Activated CD8-positive, alpha-beta T cell treated with anti-CD3 and anti-CD28 coated beads, Interleukin-2, amount 10 ng/mL, durations not matched to agents 7 days and 5 days (primary cell): ENCODE measurements at regions of chr19 and their contacts with region 1.

Region 1: GRCh38 chr19:38374429-38375176 is at the start of gene PSMD8:
- DNase-seq: peak; percentile 99
- ATAC-seq: peak; percentile 98
- H3K4me3 Mint-ChIP-seq: peak within 1 kb of the TSS; percentile 100
- H3K27ac Mint-ChIP-seq: peak within 1 kb of the TSS; percentile 99
- H3K4me1 Mint-ChIP-seq: peaks cover 22% of the 10 kb centered on the region
- H3K27me3 Mint-ChIP-seq: peaks cover 4% of the 10 kb centered on the region
- total RNA-seq, gene PSMD8: 173 to 187 TPM

Region 2: DNA sequence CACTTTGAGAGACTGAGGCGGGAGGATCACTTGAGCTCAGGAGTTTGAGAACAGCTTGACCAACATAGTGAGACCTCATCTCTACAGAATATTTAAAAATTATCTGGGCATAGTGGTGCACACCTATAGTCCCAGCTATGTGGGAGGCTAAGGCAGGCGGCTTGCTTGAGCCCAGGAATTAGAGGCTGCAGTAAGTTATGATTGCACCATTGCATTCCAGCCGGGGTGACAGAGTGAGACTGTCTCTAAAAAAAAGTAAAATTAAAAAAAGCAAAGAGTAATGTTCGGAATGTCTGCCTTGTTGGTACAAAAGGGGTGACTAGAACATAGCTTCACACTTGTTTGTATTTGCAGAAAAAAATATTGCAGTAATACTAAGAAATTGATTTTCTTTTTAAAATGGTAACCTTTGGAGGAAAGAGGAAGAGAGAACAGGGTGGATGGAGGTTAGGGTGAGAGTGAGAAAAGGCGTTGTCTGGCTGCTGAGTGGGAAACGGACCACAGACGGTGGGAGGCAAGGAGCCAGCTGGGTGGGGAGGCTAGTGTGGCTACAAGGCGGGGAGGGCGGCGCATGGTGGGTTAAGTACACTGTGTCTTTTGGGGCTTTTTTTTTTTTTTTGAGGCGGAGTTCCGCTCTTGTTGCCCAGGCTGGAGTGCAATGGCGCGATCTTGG is 128.6 kb before region 1 on chr19:
- CTCF ChIA-PET with region 1: interaction called, 17 read pairs
- POLR2A ChIA-PET with region 1: no interaction called
- DNase-seq: no peak
- ATAC-seq: no peak
- H3K4me3 Mint-ChIP-seq: no peak overlapping the region
- H3K27ac Mint-ChIP-seq: no peak overlapping the region
- H3K4me1 Mint-ChIP-seq: peaks cover 2% of the 10 kb centered on the region
- H3K27me3 Mint-ChIP-seq: no peaks in the 10 kb centered on the region

Region 3: DNA sequence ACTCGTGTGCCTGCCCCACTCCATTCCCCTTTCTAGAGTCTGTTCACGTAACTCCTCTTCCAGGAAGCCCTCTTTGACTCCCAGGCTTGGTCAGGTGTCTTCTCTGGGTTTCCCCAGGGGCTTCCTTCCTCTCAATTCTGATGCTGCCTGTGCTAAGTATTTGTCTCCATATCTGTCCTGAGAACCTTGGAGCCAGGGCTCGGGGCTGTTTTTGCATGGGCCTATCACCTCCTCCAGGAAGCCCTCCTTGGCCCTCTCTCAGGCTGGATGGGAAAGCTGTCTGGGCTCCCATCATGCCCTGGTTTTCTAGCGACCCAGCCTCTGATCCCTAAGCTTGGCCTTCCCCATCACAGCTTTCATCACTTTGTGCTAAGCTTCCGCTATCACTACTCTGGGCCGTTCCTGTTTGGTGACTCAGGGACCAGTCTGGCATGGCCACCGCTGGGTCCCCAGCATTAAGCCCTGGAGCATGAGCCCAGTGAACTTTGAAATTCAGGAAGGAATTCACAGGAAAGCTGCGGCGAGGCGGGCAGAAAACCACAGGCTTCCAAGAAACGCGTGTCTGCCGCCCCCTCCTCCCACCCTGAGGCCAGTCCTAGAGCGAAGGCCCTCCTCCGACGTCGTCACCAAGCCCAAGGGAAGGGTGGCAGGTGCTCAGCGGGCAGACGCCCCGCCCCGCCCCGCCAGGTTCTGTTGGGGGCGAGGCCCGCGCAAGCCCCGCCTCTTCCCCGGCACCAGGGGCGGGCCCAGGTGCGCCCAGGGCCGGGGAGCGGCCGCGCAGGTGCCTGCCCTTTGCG is 110.7 kb before region 1 on chr19:
- CTCF ChIA-PET with region 1: interaction called, 10 read pairs
- POLR2A ChIA-PET with region 1: interaction called, 5 read pairs
- DNase-seq: peak; percentile 74
- ATAC-seq: peak; percentile 87
- H3K4me3 Mint-ChIP-seq: peak overlapping the region; percentile 74
- H3K27ac Mint-ChIP-seq: peak overlapping the region; percentile 86
- H3K4me1 Mint-ChIP-seq: peaks cover 26% of the 10 kb centered on the region
- H3K27me3 Mint-ChIP-seq: no peaks in the 10 kb centered on the region

Region 4: DNA sequence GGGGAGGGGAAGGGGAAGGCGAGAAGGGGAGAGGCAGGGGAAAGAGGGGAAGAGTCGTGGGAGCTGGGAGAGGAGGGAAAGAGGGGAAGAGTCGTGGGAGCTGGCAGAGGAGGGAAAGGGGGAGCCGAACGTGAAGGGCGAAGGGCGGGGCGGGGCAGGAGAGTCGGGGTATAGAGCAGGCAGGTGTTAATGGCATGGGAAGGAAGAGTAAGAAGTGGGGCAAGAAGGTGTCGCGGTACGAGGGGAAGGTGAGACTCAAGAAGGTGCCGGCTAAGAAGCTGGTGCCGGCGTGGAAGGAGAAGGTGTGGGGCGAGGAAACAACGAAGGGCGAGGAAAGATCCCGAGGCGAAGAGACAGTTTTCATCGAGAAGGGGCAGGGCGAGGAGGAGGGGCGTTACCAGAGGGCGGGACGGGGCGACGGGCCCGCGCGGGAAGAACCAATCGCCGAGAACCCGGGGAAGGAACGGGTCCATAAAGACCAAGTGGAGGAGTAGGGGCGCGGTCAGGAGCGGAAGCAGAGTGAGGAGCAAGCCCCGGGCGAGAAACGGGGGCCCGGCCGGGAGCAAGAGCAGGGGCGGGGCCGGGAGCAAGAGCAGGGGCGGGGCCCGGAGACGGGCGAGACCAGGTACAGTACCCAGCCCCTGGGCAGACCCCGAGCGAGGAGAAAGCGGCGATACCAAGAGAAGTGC is 38.5 kb before region 1 on chr19:
- CTCF ChIA-PET with region 1: interaction called, 27 read pairs
- POLR2A ChIA-PET with region 1: interaction called, 19 read pairs
- DNase-seq: peak; percentile 96
- ATAC-seq: peak; percentile 83
- H3K4me3 Mint-ChIP-seq: peak overlapping the region; percentile 87
- H3K27ac Mint-ChIP-seq: peak overlapping the region; percentile 98
- H3K4me1 Mint-ChIP-seq: peaks cover 11% of the 10 kb centered on the region
- H3K27me3 Mint-ChIP-seq: no peaks in the 10 kb centered on the region

Region 5: DNA sequence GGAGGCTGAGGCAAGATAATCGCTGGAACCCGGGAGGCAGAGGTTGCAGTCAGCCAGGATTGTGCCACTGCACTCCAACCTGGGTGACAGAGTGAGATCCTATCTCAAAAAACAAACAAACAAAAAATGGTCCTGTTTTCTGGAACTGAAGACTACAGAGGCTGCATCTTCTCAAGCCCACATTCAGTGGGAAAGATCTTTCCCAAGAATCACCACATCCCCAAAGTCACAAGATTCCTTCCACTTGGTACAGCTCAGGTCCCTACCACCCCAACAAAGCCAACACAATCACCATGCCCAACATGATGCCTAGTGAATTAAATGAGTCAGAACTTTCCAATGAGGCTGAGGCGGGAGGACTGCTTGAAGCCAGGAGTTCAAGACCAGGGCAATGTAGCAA is 23.7 kb before region 1 on chr19:
- CTCF ChIA-PET with region 1: no interaction called
- POLR2A ChIA-PET with region 1: no interaction called
- DNase-seq: no peak
- ATAC-seq: no peak
- H3K4me3 Mint-ChIP-seq: no peak overlapping the region
- H3K27ac Mint-ChIP-seq: no peak overlapping the region
- H3K4me1 Mint-ChIP-seq: no peaks in the 10 kb centered on the region
- H3K27me3 Mint-ChIP-seq: no peaks in the 10 kb centered on the region

Region 6: DNA sequence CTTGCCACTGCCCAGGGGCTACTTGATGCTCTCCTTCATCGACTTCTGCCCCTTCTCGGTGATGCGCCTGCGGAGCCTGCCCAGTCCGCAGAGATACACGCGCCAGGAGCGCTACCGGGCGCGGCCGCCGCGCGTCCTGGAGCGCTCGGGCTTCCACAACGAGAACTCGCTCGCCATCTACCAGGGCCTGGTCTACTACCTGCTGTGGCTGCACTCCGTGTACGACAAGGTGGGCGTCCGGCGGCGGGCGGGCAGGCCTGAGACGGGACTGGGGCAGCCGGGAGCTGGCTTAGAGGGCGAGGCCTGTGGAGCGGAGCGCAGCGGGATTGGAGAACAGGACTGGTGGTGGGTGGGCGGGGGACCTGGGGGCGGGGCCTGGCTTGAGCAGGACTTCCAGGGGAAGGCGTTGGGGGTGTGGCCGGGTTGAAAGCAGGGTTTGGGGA is 12.9 kb before region 1 on chr19:
- CTCF ChIA-PET with region 1: interaction called, 8 read pairs
- POLR2A ChIA-PET with region 1: interaction called, 15 read pairs
- DNase-seq: peak; percentile 83
- ATAC-seq: peak; percentile 81
- H3K4me3 Mint-ChIP-seq: peak overlapping the region; percentile 86
- H3K27ac Mint-ChIP-seq: peak overlapping the region; percentile 74
- H3K4me1 Mint-ChIP-seq: peaks cover 18% of the 10 kb centered on the region
- H3K27me3 Mint-ChIP-seq: peaks cover 28% of the 10 kb centered on the region

Region 7: DNA sequence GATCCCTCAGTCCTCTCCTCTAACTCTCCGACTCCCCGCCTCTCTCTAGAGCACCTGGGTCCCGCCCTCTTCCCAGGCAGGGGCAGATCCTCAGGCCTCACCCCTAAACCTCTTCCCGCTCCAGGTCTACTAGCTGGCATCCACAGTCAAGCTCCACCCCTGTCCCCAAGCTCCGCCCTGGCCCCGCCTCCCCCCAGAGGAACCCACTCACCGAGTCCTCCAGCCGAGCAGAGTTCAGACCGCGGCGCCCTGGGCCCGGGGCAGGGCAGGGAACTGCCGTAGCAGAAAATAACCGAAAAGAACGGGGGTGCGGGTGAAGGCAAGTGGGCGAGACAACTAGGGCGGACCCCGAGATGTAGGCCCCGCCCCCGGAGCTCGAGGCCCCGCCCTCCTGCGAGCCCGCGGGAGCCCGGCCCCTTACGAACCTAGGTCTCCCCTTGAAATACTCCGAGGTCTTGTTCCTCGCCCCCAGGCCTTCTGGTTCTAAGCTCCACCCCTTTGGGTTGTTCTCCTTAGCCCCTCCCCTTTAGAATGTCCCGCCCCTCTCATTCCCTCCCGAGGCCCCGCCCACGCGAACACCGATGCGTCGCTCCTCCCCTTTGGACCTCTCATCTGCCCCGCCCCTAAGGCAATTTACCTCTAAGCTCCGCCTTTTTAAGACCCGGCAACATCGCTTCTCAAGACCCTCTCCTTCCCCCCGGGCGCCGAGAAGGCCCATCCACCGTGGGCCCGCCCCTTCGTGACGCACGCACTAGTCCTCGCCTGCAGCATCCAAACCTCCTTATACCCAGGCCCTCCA is 13.1 kb after region 1 on chr19 and contains the start of gene GGN:
- CTCF ChIA-PET with region 1: interaction called, 9 read pairs
- POLR2A ChIA-PET with region 1: interaction called, 15 read pairs
- DNase-seq: peak; percentile 77
- ATAC-seq: peak; percentile 78
- H3K4me3 Mint-ChIP-seq: peak within 1 kb of the TSS; percentile 70
- H3K27ac Mint-ChIP-seq: peak within 1 kb of the TSS; percentile 46
- H3K4me1 Mint-ChIP-seq: peaks cover 19% of the 10 kb centered on the region
- H3K27me3 Mint-ChIP-seq: peaks cover 37% of the 10 kb centered on the region
- total RNA-seq, gene GGN: not detected

Region 8: GRCh38 chr19:38394488-38394887 is 19.9 kb after region 1 on chr19:
- CTCF ChIA-PET with region 1: interaction called, 6 read pairs
- POLR2A ChIA-PET with region 1: interaction called, 13 read pairs
- DNase-seq: peak; percentile 84
- ATAC-seq: peak; percentile 72
- H3K4me3 Mint-ChIP-seq: peak overlapping the region; percentile 66
- H3K27ac Mint-ChIP-seq: peak overlapping the region; percentile 65
- H3K4me1 Mint-ChIP-seq: peaks cover 20% of the 10 kb centered on the region
- H3K27me3 Mint-ChIP-seq: peaks cover 42% of the 10 kb centered on the region

Region 9: GRCh38 chr19:38429055-38429810 is 54.6 kb after region 1 on chr19:
- CTCF ChIA-PET with region 1: no interaction called
- POLR2A ChIA-PET with region 1: no interaction called
- DNase-seq: no peak
- ATAC-seq: peak; percentile 45
- H3K4me3 Mint-ChIP-seq: no peak overlapping the region
- H3K27ac Mint-ChIP-seq: no peak overlapping the region
- H3K4me1 Mint-ChIP-seq: peaks cover 24% of the 10 kb centered on the region
- H3K27me3 Mint-ChIP-seq: peaks cover 11% of the 10 kb centered on the region

Region 10: GRCh38 chr19:38441657-38442348 is 67.2 kb after region 1 on chr19:
- CTCF ChIA-PET with region 1: no interaction called
- POLR2A ChIA-PET with region 1: no interaction called
- DNase-seq: no peak
- ATAC-seq: peak; percentile 61
- H3K4me3 Mint-ChIP-seq: no peak overlapping the region
- H3K27ac Mint-ChIP-seq: no peak overlapping the region
- H3K4me1 Mint-ChIP-seq: peaks cover 3% of the 10 kb centered on the region
- H3K27me3 Mint-ChIP-seq: peaks cover 3% of the 10 kb centered on the region